Activated CD4-positive, alpha-beta T cell treated with anti-CD3 and anti-CD28 coated beads, Interleukin-2, amount 10 ng/mL, durations not matched to agents 24 days and 14 days (primary cell): ENCODE measurements at regions of chr3 and their contacts with region 1.

Region 1: DNA sequence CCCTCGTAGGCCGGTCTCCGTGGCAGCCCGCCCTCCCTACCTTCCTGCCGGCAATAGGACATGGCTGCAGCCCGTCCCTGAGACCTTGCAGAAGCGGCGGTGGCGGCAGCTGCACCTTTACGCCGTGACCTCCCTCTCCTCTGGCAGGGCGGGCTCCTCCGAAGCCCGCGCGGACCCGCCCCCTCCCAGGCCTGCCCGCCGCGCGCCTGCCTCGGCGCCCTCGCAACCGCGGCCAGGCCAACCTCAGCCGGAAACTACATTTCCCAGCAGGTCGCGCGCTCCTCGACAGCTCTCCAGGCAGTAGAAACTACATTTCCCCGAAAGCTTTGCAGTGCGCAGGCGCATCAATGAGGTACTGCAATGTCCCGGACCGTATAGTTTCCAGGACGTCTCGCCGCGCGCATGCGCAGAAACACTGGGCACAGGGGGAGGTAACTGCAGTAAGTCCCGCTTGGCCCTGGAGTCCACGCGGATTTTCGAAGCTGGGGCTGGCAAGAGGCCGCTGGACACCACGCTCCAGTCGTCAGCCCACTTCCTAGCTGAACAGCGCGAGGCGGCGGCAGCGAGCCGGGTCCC is at the starts of genes CHCHD4 and TMEM43:
- DNase-seq: peak; percentile 99
- H3K4me3 Mint-ChIP-seq: peak within 1 kb of the TSS; percentile 98
- H3K27ac Mint-ChIP-seq: peak within 1 kb of the TSS; percentile 95
- H3K4me1 Mint-ChIP-seq: peaks cover 54% of the 10 kb centered on the region
- H3K27me3 Mint-ChIP-seq: no peaks in the 10 kb centered on the region
- total RNA-seq, gene CHCHD4: 27.7 and 29.6 TPM in 2 replicates
- total RNA-seq, gene TMEM43: 38.7 and 39.4 TPM in 2 replicates

Region 2: DNA sequence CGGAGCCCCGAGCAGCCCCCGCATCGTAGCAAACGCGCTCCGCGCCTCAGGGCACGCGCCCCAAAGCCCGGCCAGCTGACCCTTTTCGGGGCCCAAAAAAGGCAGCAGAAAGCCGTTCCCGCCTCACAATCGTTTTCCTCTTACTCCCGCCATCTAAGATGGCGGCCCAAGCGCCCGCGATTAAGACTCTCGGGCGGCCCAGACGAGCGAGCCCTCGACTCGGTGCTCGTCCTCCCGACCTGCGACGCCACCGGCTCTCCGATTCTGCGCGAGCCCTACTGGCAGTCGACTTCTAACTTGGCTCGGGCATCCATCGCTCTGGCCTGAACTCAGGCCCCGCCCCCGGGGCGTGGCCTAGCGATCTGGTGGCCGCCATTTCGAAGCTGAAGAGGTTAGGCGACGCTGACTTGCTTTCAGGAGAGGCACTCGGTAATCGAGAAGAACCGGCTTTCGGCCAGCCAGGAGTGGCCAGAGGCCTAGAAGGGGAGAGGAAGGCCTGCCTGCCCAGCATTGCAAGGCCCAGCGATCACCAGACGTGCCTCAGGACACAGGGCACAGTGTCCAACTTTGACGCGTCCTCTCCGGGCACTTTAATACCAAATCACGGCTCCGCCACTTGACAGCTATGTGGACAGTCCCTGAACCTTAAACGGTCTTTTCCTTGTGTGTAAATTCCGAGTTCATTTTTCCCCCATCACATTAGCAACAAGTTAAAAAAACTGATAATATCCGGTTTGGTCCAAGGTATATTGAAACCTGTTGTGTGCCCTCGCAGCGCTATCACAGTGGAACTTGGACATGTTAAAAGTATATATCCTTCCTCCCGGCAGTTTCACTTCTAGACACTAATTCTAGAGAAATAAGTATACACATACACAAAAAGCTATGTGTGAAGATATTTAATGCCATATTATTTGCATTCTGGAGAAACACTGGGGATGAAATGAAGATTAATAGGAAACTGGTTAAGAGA is 1460.5 kb before region 1 on chr3 and contains the start of gene RAF1:
- intact Hi-C with region 1: loop called (anchors 10 kb)
- DNase-seq: peak; percentile 99
- H3K4me3 Mint-ChIP-seq: peak within 1 kb of the TSS; percentile 88
- H3K27ac Mint-ChIP-seq: peak within 1 kb of the TSS; percentile 99
- H3K4me1 Mint-ChIP-seq: peaks cover 28% of the 10 kb centered on the region
- H3K27me3 Mint-ChIP-seq: no peaks in the 10 kb centered on the region
- total RNA-seq, gene RAF1: 90.5 and 93.2 TPM in 2 replicates

Region 3: GRCh38 chr3:12841149-12841970 is 1283.3 kb before region 1 on chr3 and contains the start of gene RPL32:
- intact Hi-C with region 1: loop called (anchors 5 kb)
- DNase-seq: peak; percentile 95
- H3K4me3 Mint-ChIP-seq: peak within 1 kb of the TSS; percentile 97
- H3K27ac Mint-ChIP-seq: peak within 1 kb of the TSS; percentile 99
- H3K4me1 Mint-ChIP-seq: peaks cover 38% of the 10 kb centered on the region
- H3K27me3 Mint-ChIP-seq: no peaks in the 10 kb centered on the region
- total RNA-seq, gene RPL32: 2,085 and 2,113 TPM in 2 replicates

Region 4: GRCh38 chr3:14144423-14145075 is 19.8 kb after region 1 on chr3:
- intact Hi-C with region 1: loop called (anchors 1 kb)
- DNase-seq: peak; percentile 93
- H3K4me3 Mint-ChIP-seq: peak overlapping the region; percentile 78
- H3K27ac Mint-ChIP-seq: peak overlapping the region; percentile 94
- H3K4me1 Mint-ChIP-seq: peaks cover 30% of the 10 kb centered on the region
- H3K27me3 Mint-ChIP-seq: no peaks in the 10 kb centered on the region

Region 5: DNA sequence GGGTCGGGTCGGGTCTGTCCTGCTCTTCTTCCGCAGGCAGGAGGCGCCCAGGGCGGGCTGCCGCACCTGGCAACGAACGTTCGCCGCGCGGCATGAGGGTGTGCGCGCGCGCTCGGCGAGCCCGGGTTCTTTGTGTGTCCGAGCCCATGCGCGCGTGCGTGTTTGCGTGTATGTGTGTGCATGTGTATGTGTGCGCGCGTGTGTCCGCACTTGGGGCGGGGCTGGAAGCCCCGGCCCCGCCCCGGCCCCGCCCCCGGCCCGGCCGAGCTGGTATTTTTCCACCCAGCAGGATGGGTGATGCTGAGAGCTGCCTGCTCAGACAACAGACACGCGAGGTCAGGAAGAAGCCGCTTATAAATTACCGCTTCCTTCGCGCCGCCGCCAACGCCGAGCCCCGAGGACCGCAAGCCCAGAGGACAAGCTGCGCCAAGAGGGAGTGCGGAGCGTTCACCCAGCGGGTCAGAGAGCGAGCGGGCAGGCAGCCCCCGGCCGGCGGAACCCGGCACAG is 277.7 kb after region 1 on chr3 and contains the start of gene SLC6A6:
- intact Hi-C with region 1: loop called (anchors 1 kb)
- DNase-seq: peak; percentile 98
- H3K4me3 Mint-ChIP-seq: peak within 1 kb of the TSS; percentile 99
- H3K27ac Mint-ChIP-seq: peak within 1 kb of the TSS; percentile 97
- H3K4me1 Mint-ChIP-seq: peaks cover 43% of the 10 kb centered on the region
- H3K27me3 Mint-ChIP-seq: no peaks in the 10 kb centered on the region
- total RNA-seq, gene SLC6A6: 53.9 and 63.7 TPM in 2 replicates

Region 6: GRCh38 chr3:14651440-14652251 is 526.9 kb after region 1 on chr3 and contains the start of gene CCDC174:
- intact Hi-C with region 1: loop called (anchors 1 kb)
- DNase-seq: peak; percentile 99
- H3K4me3 Mint-ChIP-seq: peak within 1 kb of the TSS; percentile 100
- H3K27ac Mint-ChIP-seq: peak within 1 kb of the TSS; percentile 95
- H3K4me1 Mint-ChIP-seq: peaks cover 38% of the 10 kb centered on the region
- H3K27me3 Mint-ChIP-seq: peaks cover 3% of the 10 kb centered on the region
- total RNA-seq, gene CCDC174: 16.0 and 16.8 TPM in 2 replicates

Region 7: DNA sequence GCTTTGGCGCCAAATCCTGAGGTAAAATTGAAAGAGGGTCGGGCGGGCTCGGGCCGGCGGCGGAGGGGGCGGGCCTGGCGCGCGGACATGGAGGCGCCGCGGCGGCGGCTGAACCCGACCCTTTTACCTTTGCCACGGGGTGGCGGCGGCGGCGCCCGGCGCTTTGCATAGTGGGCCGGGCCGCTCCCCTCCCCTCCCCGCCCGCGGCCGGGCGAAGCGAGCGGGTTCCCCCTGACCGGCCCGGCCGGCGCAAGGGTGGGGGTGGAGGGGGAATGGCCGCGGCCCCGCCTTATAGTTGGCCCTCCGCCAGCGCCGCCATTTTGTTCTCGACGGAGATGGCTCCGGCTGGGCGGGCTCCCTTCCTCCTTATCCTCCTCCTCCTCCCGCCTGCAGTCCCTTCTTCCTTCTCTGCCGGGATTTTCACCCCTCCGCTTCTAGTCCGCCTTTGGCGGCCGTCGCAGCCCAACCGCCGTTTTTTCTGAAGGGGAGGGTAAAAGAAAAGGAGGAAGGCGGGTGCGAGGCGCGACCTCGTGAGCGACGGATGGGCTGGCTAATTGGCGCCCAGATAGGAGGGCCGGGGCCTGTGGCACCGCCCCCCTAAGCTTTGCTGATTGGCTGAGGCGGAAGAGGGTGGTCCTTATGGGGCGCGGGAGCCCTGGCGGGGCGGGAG is 823.3 kb after region 1 on chr3:
- intact Hi-C with region 1: loop called (anchors 5 kb)
- DNase-seq: peak; percentile 99
- H3K4me3 Mint-ChIP-seq: peak overlapping the region; percentile 100
- H3K27ac Mint-ChIP-seq: peak overlapping the region; percentile 100
- H3K4me1 Mint-ChIP-seq: peaks cover 32% of the 10 kb centered on the region
- H3K27me3 Mint-ChIP-seq: no peaks in the 10 kb centered on the region